ENCODE measurements at regions of chr7 and their contacts with region 1.

Region 1: GRCh38 chr7:131654668-131655326 is 98.4 kb upstream of the PODXL start:
- DNase-seq: peak; percentile 95
- H3K4me3 ChIP-seq: no peak overlapping the region
- H3K4me3 Mint-ChIP-seq: peak overlapping the region; percentile 86
- H3K27ac Mint-ChIP-seq: peak overlapping the region; percentile 77
- H3K4me1 ChIP-seq: peaks cover 41% of the 10 kb centered on the region
- H3K4me1 Mint-ChIP-seq: peaks cover 13% of the 10 kb centered on the region
- H3K27me3 ChIP-seq: no peaks in the 10 kb centered on the region
- H3K27me3 Mint-ChIP-seq: no peaks in the 10 kb centered on the region
- CTCF ChIP-seq: peak; percentile 96 to 97

Region 2: GRCh38 chr7:131355921-131356777 is 298.6 kb before region 1 on chr7:
- CTCF ChIA-PET with region 1: no interaction called
- POLR2A ChIA-PET with region 1: no interaction called
- intact Hi-C with region 1: no loop called
- DNase-seq: no peak
- H3K4me3 ChIP-seq: no peak overlapping the region
- H3K4me3 Mint-ChIP-seq: no peak overlapping the region
- H3K27ac Mint-ChIP-seq: no peak overlapping the region
- H3K4me1 ChIP-seq: peaks cover 4% of the 10 kb centered on the region; the same call in 1 of the 2 replicates
- H3K4me1 Mint-ChIP-seq: peaks cover 18% of the 10 kb centered on the region
- H3K27me3 ChIP-seq: no peaks in the 10 kb centered on the region
- H3K27me3 Mint-ChIP-seq: no peaks in the 10 kb centered on the region
- CTCF ChIP-seq: no peak

Region 3: DNA sequence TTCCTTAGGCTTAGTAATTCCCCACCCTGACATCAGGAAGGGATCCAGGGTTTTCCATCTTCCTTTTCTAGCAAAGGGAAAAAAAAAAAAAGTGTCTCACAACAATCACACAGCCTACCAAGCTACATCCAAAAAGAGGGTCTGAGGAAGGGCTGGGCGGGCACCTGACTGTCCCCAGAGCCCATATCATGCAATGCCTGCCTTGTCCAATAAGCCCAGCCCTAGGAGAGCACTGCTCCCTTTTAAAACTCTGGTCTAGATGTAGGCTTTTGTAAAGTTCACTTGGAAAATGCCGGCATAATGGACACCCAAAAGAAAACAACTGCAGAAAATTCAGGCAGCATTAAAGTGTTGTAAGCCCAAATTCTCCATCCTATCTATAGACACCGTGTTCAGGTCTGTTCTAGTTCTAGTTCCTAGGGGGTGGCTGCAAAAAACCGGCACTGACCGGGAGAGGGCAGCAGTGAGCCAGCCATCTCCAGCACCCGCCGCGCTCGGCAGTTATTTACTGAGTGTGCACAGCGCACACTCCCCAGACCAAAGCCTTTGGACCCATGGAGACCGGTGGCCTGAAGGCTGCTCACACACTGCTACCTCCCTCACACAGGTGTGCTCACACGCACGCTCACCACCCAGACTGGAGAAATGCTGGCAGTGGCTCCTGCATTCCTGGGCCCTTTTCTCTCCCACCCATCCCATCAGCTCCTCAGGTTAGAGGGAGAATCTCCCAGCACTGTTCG is 147.0 kb before region 1 on chr7:
- CTCF ChIA-PET with region 1: interaction called, 6 read pairs
- POLR2A ChIA-PET with region 1: interaction called, 5 read pairs
- intact Hi-C with region 1: loop called (anchors 1 kb)
- DNase-seq: peak; percentile 77 to 84
- H3K4me3 ChIP-seq: no peak overlapping the region
- H3K4me3 Mint-ChIP-seq: no peak overlapping the region
- H3K27ac Mint-ChIP-seq: peak overlapping the region; percentile 27
- H3K4me1 ChIP-seq: 0 out of 2 replicates have a peak, but pooled peaks cover 3% of the 10 kb centered on the region
- H3K4me1 Mint-ChIP-seq: peaks cover 30% of the 10 kb centered on the region
- H3K27me3 ChIP-seq: no peaks in the 10 kb centered on the region
- H3K27me3 Mint-ChIP-seq: no peaks in the 10 kb centered on the region
- CTCF ChIP-seq: peak; percentile 79 to 94

Region 4: GRCh38 chr7:131546583-131547111 is 108.2 kb before region 1 on chr7:
- CTCF ChIA-PET with region 1: interaction called, 20 read pairs
- POLR2A ChIA-PET with region 1: no interaction called
- intact Hi-C with region 1: loop called (anchors 1 kb)
- DNase-seq: peak in 1 of 2 experiments; percentile 69
- H3K4me3 ChIP-seq: no peak overlapping the region
- H3K4me3 Mint-ChIP-seq: no peak overlapping the region
- H3K27ac Mint-ChIP-seq: peak overlapping the region; percentile 1
- H3K4me1 ChIP-seq: peaks cover 21% of the 10 kb centered on the region
- H3K4me1 Mint-ChIP-seq: peaks cover 30% of the 10 kb centered on the region
- H3K27me3 ChIP-seq: no peaks in the 10 kb centered on the region
- H3K27me3 Mint-ChIP-seq: no peaks in the 10 kb centered on the region
- CTCF ChIP-seq: peak; percentile 77 to 80

Region 5: GRCh38 chr7:131604841-131605279 is 49.9 kb before region 1 on chr7:
- CTCF ChIA-PET with region 1: interaction called, 5 read pairs
- POLR2A ChIA-PET with region 1: interaction called, 4 read pairs
- intact Hi-C with region 1: loop called (anchors 1 kb)
- DNase-seq: no peak
- H3K4me3 ChIP-seq: no peak overlapping the region
- H3K4me3 Mint-ChIP-seq: no peak overlapping the region
- H3K27ac Mint-ChIP-seq: peak overlapping the region; percentile 81
- H3K4me1 ChIP-seq: peaks cover 97% of the 10 kb centered on the region
- H3K4me1 Mint-ChIP-seq: peaks cover 68% of the 10 kb centered on the region
- H3K27me3 ChIP-seq: no peaks in the 10 kb centered on the region
- H3K27me3 Mint-ChIP-seq: no peaks in the 10 kb centered on the region
- CTCF ChIP-seq: no peak

Region 6: GRCh38 chr7:131625817-131626372 is 28.9 kb before region 1 on chr7:
- CTCF ChIA-PET with region 1: interaction called, 34 read pairs
- POLR2A ChIA-PET with region 1: interaction called, 18 read pairs
- intact Hi-C with region 1: loop called (anchors 1 kb)
- DNase-seq: peak; percentile 95 to 97
- H3K4me3 ChIP-seq: no peak overlapping the region
- H3K4me3 Mint-ChIP-seq: peak overlapping the region; percentile 20
- H3K27ac Mint-ChIP-seq: peak overlapping the region; percentile 86
- H3K4me1 ChIP-seq: peaks cover 91% of the 10 kb centered on the region
- H3K4me1 Mint-ChIP-seq: peaks cover 64% of the 10 kb centered on the region
- H3K27me3 ChIP-seq: no peaks in the 10 kb centered on the region
- H3K27me3 Mint-ChIP-seq: no peaks in the 10 kb centered on the region
- CTCF ChIP-seq: peak; percentile 18 to 35